PC-9 (cell line): ENCODE measurements at regions of chr17 and their contacts with region 1.

Region 1: GRCh38 chr17:75855310-75856081 is at the start of gene WBP2:
- DNase-seq: peak; percentile 96 to 100
- H3K4me3 ChIP-seq: peak within 1 kb of the TSS; percentile 74
- H3K27ac ChIP-seq: peak within 1 kb of the TSS; percentile 79
- H3K4me1 ChIP-seq: peaks cover 23% of the 10 kb centered on the region
- H3K27me3 ChIP-seq: no peaks in the 10 kb centered on the region
- CTCF ChIP-seq: peak; percentile 52
- total RNA-seq, gene WBP2: 114 and 159 TPM in 2 replicates

Region 2: DNA sequence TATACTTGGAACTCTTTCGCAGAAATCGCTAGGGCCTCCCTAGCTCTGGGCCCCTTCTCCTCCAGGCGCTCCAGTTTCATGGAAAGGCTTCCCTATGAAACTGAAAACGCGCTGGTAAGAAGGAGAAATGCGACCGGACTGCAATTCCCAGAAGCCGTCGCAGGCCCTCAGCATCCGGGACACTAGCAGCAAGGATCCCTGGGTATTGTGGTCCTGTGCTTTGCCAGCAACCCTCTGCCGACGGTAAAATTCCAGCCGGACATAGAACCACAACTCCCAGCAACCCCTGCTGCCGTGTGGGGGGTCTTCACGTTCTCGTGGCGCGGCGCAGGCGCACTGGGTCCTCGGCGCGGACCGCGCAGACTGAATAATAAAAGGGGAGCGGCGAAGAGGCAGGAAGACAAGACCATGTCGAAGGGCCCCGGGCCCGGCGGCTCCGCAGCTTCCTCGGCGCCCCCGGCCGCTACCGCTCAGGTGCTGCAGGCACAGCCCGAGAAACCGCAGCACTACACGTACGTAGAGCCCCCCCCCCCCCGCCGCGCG is 71.0 kb before region 1 on chr17 and contains the start of gene UNK:
- CTCF ChIA-PET with region 1: interaction called, 7 read pairs
- POLR2A ChIA-PET with region 1: interaction called, 18 read pairs
- intact Hi-C with region 1: loop called (anchors 2 kb)
- DNase-seq: peak; percentile 96
- H3K4me3 ChIP-seq: peak within 1 kb of the TSS; percentile 72
- H3K27ac ChIP-seq: peak within 1 kb of the TSS; percentile 94
- H3K4me1 ChIP-seq: peaks cover 52% of the 10 kb centered on the region
- H3K27me3 ChIP-seq: no peaks in the 10 kb centered on the region
- CTCF ChIP-seq: no peak
- total RNA-seq, gene UNK: 25.3 and 27.8 TPM in 2 replicates

Region 3: DNA sequence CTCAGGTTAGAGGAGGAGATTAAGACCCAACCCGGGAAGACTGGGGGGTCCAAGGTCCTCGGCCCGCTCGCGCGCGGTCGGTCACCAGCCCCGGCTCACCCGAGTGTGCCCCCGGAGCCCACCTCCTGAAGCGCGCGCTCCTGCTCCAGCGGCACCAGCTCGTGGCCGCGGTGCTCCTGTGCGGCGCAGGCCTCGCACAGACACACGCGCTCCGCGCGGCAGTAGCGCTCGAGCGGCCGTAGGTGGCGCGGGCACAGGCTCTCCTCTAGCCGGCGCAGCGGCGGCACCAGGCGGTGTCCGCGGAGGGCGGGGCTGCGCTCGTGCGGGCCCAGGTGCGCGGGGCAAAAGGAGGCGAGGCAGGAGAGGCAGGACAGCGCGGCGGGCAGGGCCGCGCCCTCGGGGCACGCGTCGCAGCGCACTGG is 22.3 kb after region 1 on chr17:
- CTCF ChIA-PET with region 1: interaction called, 7 read pairs
- POLR2A ChIA-PET with region 1: interaction called, 16 read pairs
- intact Hi-C with region 1: loop called (anchors 1 kb)
- DNase-seq: peak; percentile 66 to 74
- H3K4me3 ChIP-seq: peak overlapping the region; percentile 96
- H3K27ac ChIP-seq: peak overlapping the region; percentile 87
- H3K4me1 ChIP-seq: peaks cover 35% of the 10 kb centered on the region
- H3K27me3 ChIP-seq: no peaks in the 10 kb centered on the region
- CTCF ChIP-seq: no peak

Region 4: GRCh38 chr17:75913537-75914210 is 58.2 kb after region 1 on chr17:
- CTCF ChIA-PET with region 1: no interaction called
- POLR2A ChIA-PET with region 1: interaction called, 45 read pairs
- intact Hi-C with region 1: no loop called
- DNase-seq: no peak
- H3K4me3 ChIP-seq: no peak overlapping the region
- H3K27ac ChIP-seq: no peak overlapping the region
- H3K4me1 ChIP-seq: no peaks in the 10 kb centered on the region
- H3K27me3 ChIP-seq: no peaks in the 10 kb centered on the region
- CTCF ChIP-seq: no peak